ENCODE measurements at regions of chr3 and their contacts with region 1.

Region 1: GRCh38 chr3:125119752-125120378 is 64.1 kb upstream of the HEG1 start:
- DNase-seq: no peak
- H3K4me3 ChIP-seq: peak overlapping the region; percentile 23 to 60 (median 48); a peak in 7 of 8 replicates
- H3K27ac ChIP-seq: peak overlapping the region; percentile 26; the same call in 1 of the 2 replicates
- H3K4me1 ChIP-seq: peaks cover 12 to 32% (median 16%) of the 10 kb centered on the region in 4 experiments
- H3K27me3 ChIP-seq: no peaks in the 10 kb centered on the region
- CTCF ChIP-seq: no peak
- EP300 ChIP-seq: no peak
- POLR2A ChIP-seq: no peak
- RAD21 ChIP-seq: no peak

Region 2: DNA sequence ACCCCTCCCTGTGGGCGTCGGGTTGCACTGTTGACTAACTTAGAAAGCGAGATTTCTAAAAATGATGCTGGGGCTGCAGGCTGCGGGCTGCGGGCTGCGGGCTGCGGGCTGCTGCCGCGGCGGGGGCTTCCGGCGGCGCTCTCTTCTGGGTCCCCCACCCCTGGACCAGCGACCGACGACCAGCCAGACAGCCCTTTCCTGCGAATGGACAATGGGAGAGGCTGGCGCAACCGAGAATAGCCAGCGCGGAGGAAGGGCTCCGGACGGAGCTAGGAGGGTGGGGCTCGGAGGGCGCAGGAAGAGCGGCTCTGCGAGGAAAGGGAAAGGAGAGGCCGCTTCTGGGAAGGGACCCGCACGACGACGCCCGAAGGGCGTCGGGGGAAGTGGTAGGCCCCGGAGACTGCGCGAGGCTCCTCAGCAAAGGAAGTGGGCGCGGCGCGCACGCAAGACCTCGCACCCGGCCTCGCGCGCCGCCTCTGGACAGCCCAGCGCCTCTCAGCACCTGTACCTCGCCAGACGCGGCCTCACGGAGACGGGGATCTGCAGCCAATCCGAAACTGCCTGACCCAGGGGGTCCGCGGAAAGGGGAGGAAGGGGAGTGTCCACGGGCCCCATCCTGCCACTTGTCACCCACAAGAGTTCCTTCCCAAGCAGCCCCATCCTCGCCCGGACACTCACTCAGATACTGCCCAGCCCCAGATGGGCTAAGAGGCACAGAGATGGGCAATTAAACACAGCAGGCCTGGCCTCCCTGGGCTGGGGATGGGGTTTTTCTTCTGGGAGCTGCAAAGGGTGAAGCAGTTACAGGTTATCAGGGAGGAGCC is 21.9 kb after region 1 on chr3:
- CTCF ChIA-PET with region 1: interaction called, 5 read pairs
- POLR2A ChIA-PET with region 1: interaction called, 10 read pairs
- DNase-seq: peak in 1 of 2 experiments; percentile 81
- H3K4me3 ChIP-seq: peak overlapping the region; percentile 30 to 69 (median 39)
- H3K27ac ChIP-seq: no peak overlapping the region
- H3K4me1 ChIP-seq: peaks cover 11 to 34% (median 26%) of the 10 kb centered on the region in 4 experiments
- H3K27me3 ChIP-seq: peaks cover 0 to 8% (median 5%) of the 10 kb centered on the region in 4 experiments; a peak in 5 of 7 replicates
- CTCF ChIP-seq: peak; percentile 33 to 44 (median 44); a peak in 3 of 4 replicates
- EP300 ChIP-seq: no peak
- POLR2A ChIP-seq: no peak
- RAD21 ChIP-seq: peak; percentile 31 to 52

Region 3: DNA sequence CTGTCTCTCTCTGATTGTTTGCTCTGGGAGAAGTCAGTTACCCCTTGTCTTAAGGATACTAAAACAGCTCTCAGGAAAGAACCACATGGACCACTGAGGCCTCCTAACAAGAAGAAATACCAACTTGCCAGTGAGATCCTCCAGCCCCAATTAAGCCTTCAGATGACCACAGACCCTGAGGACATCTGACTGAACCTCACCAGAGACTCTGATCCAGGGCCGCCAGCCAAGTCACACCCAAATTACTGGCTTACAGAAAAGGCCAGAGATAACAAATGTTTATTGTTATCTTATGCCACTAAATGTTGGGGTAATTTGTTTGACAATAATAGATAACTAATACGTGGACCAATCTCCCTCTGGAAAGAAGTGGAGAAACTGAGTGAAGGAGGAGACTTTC is 52.5 kb after region 1 on chr3:
- CTCF ChIA-PET with region 1: no interaction called
- POLR2A ChIA-PET with region 1: no interaction called
- DNase-seq: no peak
- H3K4me3 ChIP-seq: no peak overlapping the region
- H3K27ac ChIP-seq: no peak overlapping the region
- H3K4me1 ChIP-seq: no peaks in the 10 kb centered on the region
- H3K27me3 ChIP-seq: no peaks in the 10 kb centered on the region
- CTCF ChIP-seq: no peak
- EP300 ChIP-seq: no peak
- POLR2A ChIP-seq: no peak
- RAD21 ChIP-seq: no peak